Activated CD4-positive, alpha-beta T cell treated with anti-CD3 and anti-CD28 coated beads, Interleukin-2, amount 10 ng/mL, durations not matched to agents 24 days and 14 days (primary cell): ENCODE measurements at regions of chr4 and their contacts with region 1.

Region 1: DNA sequence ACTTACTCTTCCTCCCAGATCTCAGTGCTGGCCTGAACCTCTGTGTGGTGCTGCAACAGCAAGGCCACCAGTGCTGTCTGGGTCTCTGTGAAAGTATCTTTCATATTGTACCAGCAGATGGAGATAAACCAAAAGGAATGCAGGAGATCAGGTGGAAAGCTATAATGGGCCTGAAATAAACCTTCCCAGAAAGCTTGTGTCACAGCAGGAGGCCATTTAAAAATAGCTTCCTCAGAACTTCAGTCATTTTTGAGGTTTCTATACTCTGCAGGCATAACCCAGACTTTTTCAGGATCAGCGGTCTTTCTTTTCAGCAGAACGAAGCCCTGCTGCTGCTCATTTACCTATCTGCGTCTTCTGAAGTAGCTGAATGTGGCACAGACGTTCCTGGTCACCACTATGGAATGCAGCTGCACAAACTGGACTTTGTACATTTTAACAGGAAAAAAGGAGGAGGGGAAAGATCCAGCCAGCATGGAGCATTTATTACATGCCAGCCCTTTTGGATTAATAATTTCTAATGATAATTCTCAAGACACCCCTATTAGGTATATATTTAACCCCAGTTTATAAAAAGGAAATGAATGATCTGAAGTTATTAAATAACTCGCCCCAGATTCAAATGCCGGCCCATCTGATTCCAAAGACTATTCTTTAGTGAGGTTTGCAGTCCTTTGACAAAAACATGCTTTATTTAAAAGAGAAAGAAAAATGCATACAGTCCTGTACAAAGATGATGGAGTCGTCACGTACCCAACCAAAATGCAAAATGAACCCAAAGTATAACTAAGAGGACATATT is 119.7 kb downstream of the NFKB1 start:
- DNase-seq: no peak
- H3K4me3 Mint-ChIP-seq: no peak overlapping the region
- H3K27ac Mint-ChIP-seq: peak overlapping the region; percentile 62
- H3K4me1 Mint-ChIP-seq: peaks cover 53% of the 10 kb centered on the region
- H3K27me3 Mint-ChIP-seq: no peaks in the 10 kb centered on the region

Region 2: DNA sequence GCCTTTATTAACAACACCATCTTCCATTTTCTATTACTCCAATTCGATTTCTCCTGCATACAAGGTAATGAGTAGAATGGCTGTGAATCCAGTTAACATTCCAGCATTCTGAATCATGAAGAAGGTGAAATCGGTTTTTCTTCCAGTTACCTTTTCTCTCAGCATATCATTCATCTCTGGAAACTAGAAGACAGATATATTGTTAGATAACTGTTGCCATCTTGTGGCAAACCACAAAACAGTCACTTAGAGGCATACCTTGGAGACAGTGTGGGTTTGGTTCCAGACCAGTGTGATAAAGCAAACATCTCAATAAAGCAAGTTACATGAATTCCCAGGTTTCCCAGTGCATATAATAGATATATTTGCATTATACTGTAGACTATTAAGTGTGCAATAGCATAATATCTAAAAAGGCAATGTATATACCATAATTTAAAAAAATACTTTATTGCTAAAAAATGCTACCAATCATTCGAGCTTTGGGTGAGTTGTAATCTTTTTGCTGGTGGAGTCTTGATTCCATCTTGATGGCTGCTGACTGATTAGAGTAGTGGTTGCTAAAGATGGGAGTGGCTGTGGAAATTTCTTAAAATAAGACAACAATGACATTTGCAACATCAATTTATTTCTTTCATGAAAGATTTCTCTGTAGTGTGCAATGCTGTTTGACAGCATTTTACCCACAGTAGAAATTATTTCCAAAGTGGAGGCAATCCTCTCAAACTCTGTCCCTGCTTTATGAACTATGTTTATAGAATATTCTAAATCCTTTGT is 357.7 kb before region 1 on chr4:
- intact Hi-C with region 1: loop called (anchors 10 kb)
- DNase-seq: peak; percentile 70
- H3K4me3 Mint-ChIP-seq: no peak overlapping the region
- H3K27ac Mint-ChIP-seq: no peak overlapping the region
- H3K4me1 Mint-ChIP-seq: peaks cover 11% of the 10 kb centered on the region
- H3K27me3 Mint-ChIP-seq: no peaks in the 10 kb centered on the region

Region 3: GRCh38 chr4:102449751-102450352 is 171.0 kb before region 1 on chr4:
- intact Hi-C with region 1: loop called (anchors 1 kb)
- DNase-seq: peak; percentile 89
- H3K4me3 Mint-ChIP-seq: no peak overlapping the region
- H3K27ac Mint-ChIP-seq: no peak overlapping the region
- H3K4me1 Mint-ChIP-seq: peaks cover 42% of the 10 kb centered on the region
- H3K27me3 Mint-ChIP-seq: no peaks in the 10 kb centered on the region

Region 4: DNA sequence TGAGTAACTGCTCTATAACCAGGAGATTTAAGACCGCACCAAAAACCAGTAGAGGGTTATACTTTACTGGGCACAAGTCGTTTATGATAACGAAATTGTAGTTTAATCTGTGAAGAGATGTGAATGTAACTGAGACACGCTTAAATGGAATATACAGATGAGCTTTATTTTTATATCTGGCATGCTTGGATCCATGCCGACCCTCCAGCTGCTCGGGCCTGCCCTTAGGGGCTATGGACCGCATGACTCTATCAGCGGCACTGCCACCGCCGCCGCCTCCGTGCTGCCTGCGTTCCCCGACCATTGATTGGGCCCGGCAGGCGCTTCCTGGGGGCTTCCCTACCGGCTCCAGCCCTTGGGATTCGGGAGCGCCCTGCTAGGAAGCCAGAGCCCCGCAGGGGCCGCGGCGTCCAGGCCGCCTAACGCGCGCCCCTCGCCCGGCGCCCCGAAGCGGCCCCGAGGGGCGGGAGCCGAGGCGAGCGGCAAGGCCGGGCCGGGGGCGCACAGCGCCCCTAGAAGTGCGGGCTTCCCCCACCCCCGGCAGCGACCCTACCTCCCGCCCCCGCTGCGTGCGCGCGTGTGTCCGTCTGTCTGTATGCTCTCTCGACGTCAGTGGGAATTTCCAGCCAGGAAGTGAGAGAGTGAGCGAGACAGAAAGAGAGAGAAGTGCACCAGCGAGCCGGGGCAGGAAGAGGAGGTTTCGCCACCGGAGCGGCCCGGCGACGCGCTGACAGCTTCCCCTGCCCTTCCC is 120.0 kb before region 1 on chr4 and contains the start of gene NFKB1:
- intact Hi-C with region 1: loop called (anchors 2 kb)
- DNase-seq: peak; percentile 95
- H3K4me3 Mint-ChIP-seq: peak within 1 kb of the TSS; percentile 95
- H3K27ac Mint-ChIP-seq: peak within 1 kb of the TSS; percentile 95
- H3K4me1 Mint-ChIP-seq: peaks cover 22% of the 10 kb centered on the region
- H3K27me3 Mint-ChIP-seq: no peaks in the 10 kb centered on the region
- total RNA-seq, gene NFKB1: 146 and 148 TPM in 2 replicates

Region 5: DNA sequence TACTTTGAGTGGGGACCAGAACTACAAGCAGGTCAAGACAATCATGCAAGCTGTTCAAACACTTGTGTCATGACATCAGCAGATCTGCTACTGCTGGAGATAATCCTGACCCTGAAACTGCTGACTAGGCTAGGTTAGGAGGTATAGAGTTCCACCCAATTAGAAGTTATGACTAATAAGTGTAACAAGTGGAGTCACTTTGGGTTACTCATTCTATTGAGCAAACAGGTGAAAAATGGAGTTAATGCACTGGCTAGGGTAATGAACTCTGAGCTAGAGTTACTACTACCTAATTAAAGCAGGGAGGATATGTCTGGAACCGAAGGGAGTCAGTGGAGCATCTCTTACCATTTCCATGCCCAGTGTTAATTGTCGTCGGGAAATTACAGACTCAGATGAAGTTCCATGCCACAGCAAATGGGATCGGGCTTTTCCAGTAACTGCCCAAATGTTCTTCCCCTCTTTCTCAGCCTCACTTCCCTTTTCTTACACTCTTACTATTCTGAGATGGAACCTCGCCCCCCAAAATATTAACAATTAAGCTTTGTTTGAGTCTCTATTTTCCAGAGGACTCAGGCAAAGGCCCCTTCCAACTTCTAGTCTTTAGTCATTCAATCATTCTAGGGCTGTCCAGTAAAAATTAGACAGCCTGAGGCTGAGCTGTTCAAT is 159.7 kb after region 1 on chr4:
- intact Hi-C with region 1: loop called (anchors 10 kb)
- DNase-seq: peak; percentile 31
- H3K4me3 Mint-ChIP-seq: no peak overlapping the region
- H3K27ac Mint-ChIP-seq: no peak overlapping the region
- H3K4me1 Mint-ChIP-seq: no peaks in the 10 kb centered on the region
- H3K27me3 Mint-ChIP-seq: peaks cover 4% of the 10 kb centered on the region

Region 6: DNA sequence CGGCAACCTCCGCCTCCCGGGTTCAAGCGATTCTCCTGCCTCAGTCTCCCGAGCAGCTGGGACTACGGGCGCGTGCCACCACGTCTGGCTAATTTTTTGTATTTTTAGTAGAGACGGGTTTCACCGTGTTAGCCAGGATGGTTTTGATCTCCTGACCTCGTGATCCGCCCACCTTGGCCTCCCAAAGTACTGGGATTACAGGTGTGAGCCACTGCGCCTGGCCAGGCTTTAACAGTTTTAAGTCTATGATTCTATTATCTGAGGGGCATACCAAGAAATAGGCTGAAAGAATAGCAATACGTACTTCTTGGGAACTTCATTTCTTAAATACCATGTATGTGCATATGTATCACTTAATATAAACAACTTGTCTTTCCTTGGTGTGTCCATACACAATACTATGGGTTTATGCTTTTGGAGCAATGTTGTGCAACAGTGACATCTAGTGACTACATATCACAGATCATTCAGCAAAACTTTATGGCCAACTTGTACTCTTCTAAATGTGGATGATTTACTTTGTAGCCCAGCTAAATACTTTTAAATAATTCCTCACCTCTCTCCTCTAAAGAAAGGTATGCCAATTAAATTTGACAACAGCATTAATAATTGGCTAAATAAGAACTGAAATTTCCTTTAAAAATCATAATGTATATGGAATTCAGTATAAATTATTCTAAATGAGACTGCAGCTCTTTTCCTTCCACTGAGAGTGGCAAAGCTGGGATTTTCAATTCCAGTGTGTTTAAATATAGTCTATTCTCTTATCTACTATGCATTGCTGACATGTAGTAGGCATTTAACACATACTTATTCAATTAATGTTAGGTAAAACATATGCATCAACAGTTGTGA is 388.2 kb after region 1 on chr4:
- intact Hi-C with region 1: loop called (anchors 1 kb)
- DNase-seq: peak; percentile 83
- H3K4me3 Mint-ChIP-seq: no peak overlapping the region
- H3K27ac Mint-ChIP-seq: no peak overlapping the region
- H3K4me1 Mint-ChIP-seq: no peaks in the 10 kb centered on the region
- H3K27me3 Mint-ChIP-seq: peaks cover 8% of the 10 kb centered on the region